ENCODE measurements at regions of chr2 and their contacts with region 1.

Region 1: DNA sequence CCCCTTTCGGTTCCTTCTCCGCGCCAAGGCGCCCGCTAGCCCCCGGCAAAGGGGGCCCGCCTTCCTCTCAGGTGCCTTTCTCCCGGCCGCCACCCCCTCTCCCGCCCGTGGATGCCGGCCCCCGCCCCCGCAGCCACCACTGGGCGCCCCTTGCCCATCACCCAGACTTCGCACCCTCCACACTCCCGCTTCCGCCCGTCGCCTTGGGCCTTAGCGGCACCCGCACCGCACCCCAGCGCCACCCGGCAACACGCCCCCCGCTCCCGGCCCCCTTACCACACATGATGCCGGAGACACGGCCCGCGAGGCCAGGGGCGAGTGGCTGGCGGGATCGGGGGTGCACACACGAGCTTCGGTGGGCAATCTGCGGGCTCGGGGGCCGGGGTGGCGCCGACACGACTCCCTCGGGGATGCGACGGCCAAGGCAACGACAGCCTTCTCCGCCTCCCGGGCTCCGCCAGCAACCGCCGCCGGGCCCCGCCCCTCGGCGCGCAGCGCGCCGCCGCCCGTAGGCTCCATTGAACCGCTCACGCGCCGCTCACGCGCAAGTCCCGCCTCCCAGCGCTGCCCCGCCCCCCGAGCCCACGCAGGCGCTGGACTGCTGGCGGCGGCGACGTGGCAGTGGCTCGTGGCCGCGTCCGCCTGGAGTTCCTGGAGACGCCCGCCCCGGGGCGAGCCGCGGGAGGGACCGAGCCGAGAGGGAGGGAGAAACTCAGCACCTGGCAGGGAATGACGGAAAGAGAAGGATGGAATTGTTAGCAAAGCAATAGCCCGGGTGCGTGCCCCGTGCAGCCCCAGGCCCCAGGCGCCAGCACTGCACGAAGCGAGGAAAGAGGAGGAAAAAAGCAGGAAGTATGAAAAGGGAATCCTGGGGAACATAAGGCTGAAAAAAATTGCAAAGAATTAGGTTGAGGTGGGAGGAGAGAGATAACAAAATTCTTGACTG is at the start of gene GFPT1:
- DNase-seq: peak; percentile 94
- ATAC-seq: peak; percentile 97
- H3K4me3 Mint-ChIP-seq: peak within 1 kb of the TSS; percentile 88
- H3K27ac Mint-ChIP-seq: peak within 1 kb of the TSS; percentile 81
- H3K4me1 Mint-ChIP-seq: peaks cover 38% of the 10 kb centered on the region
- H3K27me3 Mint-ChIP-seq: no peaks in the 10 kb centered on the region
- CTCF ChIP-seq: no peak
- total RNA-seq, gene GFPT1: 11.5 and 14.9 TPM in 2 replicates

Region 2: DNA sequence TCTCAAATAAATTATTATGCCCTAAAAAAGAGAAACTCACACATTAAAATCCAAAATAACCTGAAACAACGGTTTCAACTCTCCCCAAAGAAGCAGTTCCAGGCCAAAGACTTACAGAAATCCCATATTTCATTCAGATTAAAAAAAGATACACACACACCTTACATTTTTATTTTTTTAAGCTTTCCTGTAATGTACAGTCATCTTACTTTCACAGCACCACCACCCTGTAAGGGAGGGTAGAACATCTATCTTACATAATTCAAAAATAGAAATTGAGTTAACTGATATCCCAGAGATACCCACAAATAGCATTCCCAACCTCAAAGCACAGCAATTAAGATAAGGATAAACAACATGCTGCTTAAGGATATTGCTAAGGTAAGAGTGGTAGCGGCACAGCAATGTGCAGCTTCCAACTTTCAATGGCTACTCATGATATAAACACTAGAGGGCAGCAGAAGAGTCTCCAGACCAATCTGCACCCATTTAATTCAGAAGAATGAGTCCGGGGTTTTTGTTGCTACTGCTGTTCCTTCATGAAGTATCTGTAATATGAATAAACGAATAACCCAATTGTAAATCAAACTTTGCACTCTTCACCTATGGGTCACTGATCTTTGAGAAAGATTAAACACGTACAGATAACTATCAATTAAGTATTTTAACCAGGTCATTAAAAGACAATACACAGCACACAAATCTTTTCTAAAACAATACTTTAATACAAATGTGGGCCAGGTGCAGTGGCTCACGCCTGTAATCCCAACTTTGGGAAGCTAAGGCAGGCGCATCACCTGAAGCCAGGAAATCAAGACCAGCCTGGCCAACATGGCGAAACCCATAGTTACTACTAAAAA is 11.3 kb before region 1 on chr2:
- CTCF ChIA-PET with region 1: interaction called, 6 read pairs
- POLR2A ChIA-PET with region 1: interaction called, 9 read pairs
- intact Hi-C with region 1: loop called (anchors 2 kb)
- DNase-seq: no peak
- ATAC-seq: no peak
- H3K4me3 Mint-ChIP-seq: no peak overlapping the region
- H3K27ac Mint-ChIP-seq: no peak overlapping the region
- H3K4me1 Mint-ChIP-seq: peaks cover 8% of the 10 kb centered on the region
- H3K27me3 Mint-ChIP-seq: no peaks in the 10 kb centered on the region
- CTCF ChIP-seq: no peak

Region 3: GRCh38 chr2:69565431-69565839 is 178.4 kb after region 1 on chr2:
- CTCF ChIA-PET with region 1: no interaction called
- POLR2A ChIA-PET with region 1: no interaction called
- intact Hi-C with region 1: loop called (anchors 5 kb)
- DNase-seq: peak; percentile 43
- ATAC-seq: peak; percentile 52
- H3K4me3 Mint-ChIP-seq: no peak overlapping the region
- H3K27ac Mint-ChIP-seq: no peak overlapping the region
- H3K4me1 Mint-ChIP-seq: no peaks in the 10 kb centered on the region
- H3K27me3 Mint-ChIP-seq: peaks cover 20% of the 10 kb centered on the region
- CTCF ChIP-seq: peak; percentile 25

Region 4: GRCh38 chr2:69829256-69830046 is 442.4 kb after region 1 on chr2 and contains the start of gene GMCL1:
- CTCF ChIA-PET with region 1: no interaction called
- POLR2A ChIA-PET with region 1: no interaction called
- intact Hi-C with region 1: loop called (anchors 5 kb)
- DNase-seq: peak; percentile 99
- ATAC-seq: peak; percentile 95
- H3K4me3 Mint-ChIP-seq: peak within 1 kb of the TSS; percentile 94
- H3K27ac Mint-ChIP-seq: peak within 1 kb of the TSS; percentile 96
- H3K4me1 Mint-ChIP-seq: peaks cover 29% of the 10 kb centered on the region
- H3K27me3 Mint-ChIP-seq: no peaks in the 10 kb centered on the region
- CTCF ChIP-seq: no peak
- total RNA-seq, gene GMCL1: 8.0 and 13.0 TPM in 2 replicates

Measured in activated B cell treated with CpG ODN at 0.5 μM for 24 hours (primary cell).